ENCODE measurements at regions of chr1 and their contacts with region 1.

Region 1: GRCh38 chr1:43729816-43730463 is 22.6 kb downstream of the ST3GAL3 start:
- DNase-seq: no peak
- H3K4me3 ChIP-seq: no peak overlapping the region
- H3K27ac ChIP-seq: no peak overlapping the region
- H3K4me1 ChIP-seq: no peaks in the 10 kb centered on the region
- H3K27me3 ChIP-seq: no peaks in the 10 kb centered on the region
- CTCF ChIP-seq: no peak

Region 2: DNA sequence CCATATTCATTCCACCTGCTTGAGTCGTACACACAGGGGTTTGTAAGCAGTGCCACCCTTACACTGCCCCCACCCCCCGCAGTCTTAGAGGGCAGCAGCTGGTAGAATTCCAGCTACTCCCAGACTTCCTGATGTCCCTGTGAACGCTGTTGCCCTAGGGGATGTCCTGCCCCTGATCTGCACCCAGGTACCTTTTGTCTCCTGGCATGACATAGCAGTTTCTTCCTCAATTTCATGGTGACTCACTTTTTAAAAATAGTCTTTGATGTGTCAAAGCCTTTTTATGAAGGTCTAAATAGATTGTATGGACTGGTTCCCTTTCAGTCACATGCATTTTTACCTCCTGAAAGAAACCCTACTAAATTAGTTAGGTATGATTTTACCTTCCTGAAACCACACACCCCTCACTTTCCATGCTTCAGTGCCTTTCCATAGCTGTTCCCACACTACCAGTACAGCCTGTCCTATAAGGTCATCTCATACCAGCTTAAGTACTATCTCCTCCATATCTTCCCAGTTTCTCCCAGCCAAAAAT is 53.8 kb after region 1 on chr1:
- CTCF ChIA-PET with region 1: no interaction called
- POLR2A ChIA-PET with region 1: interaction called, 18 read pairs
- intact Hi-C with region 1: no loop called
- DNase-seq: no peak
- H3K4me3 ChIP-seq: no peak overlapping the region
- H3K27ac ChIP-seq: no peak overlapping the region
- H3K4me1 ChIP-seq: peaks cover 9% of the 10 kb centered on the region
- H3K27me3 ChIP-seq: no peaks in the 10 kb centered on the region
- CTCF ChIP-seq: no peak